ENCODE measurements at regions of chr17 and their contacts with region 1.

Region 1: DNA sequence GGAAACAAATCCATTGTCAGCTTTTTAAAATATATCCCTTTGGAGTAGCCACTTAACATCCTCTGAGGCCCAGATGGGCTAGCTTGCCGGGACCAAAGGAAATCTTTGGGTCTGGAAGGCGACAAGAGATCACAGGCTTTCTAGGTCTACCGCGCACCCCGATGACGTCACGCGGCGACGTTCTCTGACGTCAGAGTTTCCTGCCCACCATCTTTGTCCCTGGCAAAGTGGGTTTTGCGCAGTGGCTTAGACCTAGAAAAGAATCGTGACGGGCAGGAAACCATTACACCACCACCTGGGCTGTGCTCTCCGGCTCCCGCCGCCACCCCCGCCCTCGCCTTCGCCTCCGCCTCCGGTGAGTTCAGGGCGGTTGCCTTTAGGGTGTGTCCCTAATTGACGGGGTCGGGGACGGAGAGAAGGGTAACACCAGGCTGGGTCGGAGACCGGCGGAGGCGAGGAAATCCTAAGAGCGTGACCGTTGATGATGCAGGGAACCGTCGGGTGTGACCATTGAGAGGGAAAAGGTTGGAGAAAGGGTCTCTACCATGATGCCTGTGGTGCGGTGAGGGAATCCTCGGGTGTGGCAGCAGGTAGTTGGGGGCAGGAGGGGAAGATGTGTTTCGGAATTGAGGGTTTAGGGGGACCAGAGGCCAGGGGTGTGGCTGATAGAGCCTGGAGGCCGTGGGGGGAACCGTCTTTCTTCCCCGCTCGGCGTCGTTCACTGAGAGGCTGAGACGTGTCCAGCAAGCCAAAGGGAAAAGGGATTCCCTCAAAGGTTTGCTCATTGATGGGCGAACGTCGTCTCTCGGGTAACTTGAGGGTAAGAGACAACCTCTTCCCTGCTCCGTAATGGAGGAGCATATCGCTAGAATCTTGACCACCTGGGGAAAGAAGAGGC is at the start of gene AP2B1:
- DNase-seq: peak; percentile 69
- H3K4me3 ChIP-seq: peak within 1 kb of the TSS; percentile 75
- H3K27me3 ChIP-seq: no peaks in the 10 kb centered on the region; the same call in 1 of the 2 replicates
- CTCF ChIP-seq: no peak
- polyA plus RNA-seq, gene AP2B1: 122 and 151 TPM in 2 replicates

Region 2: DNA sequence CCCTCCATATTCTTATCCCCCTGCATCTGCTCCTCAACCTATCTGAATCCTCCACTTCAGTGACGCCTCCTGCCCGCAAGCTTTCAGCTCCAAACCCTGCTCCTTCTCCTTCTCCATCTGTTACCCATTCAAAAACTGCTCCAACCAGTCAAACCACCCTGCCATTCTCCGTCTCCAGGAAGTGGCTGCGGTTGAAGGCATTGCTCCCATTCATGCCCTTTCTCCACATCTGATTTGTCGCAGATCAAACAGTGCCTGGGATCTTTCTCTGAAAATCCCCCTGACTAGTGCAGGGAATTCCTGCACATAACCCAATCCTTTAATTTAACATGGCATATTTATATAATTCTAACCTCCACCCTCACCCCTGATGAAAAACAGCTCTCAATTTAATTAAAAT is 288.2 kb before region 1 on chr17:
- CTCF ChIA-PET with region 1: no interaction called
- POLR2A ChIA-PET with region 1: no interaction called
- DNase-seq: no peak
- H3K4me3 ChIP-seq: no peak overlapping the region
- H3K27me3 ChIP-seq: no peaks in the 10 kb centered on the region
- CTCF ChIP-seq: no peak

Region 3: GRCh38 chr17:35627417-35627816 is 40.1 kb after region 1 on chr17:
- CTCF ChIA-PET with region 1: no interaction called
- POLR2A ChIA-PET with region 1: no interaction called
- DNase-seq: no peak
- H3K4me3 ChIP-seq: no peak overlapping the region
- H3K27me3 ChIP-seq: no peaks in the 10 kb centered on the region
- CTCF ChIP-seq: no peak

Region 4: DNA sequence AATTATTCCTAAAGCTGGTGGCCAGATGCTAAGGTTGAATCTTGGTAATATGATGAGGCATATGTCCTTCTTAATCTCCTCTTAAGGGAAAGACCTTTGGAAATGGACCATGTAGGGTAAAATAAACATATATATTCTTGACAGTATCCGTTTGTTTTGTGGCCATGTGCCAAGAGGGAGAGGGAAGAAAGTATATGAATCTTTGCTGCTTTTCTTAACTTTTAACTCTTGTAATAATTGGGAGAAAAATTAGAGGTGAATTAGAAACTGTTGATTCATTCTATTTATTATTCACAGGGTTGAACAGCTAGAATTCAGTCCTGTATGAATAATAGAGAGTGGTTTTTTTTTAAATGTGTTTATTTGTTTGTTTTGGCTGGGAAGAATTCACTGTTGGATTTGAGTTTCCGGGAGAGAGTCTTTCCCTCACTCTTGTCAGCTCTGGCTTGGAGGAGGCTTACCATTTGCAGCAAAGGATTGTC is 1393.0 kb after region 1 on chr17:
- CTCF ChIA-PET with region 1: no interaction called
- POLR2A ChIA-PET with region 1: interaction called, 16 read pairs
- DNase-seq: no peak
- H3K4me3 ChIP-seq: no peak overlapping the region
- H3K27me3 ChIP-seq: no peaks in the 10 kb centered on the region
- CTCF ChIP-seq: no peak